Left ventricle myocardium superior (tissue), 1 donor: ENCODE measurements at regions of chr5 and their contacts with region 1.

Region 1: DNA sequence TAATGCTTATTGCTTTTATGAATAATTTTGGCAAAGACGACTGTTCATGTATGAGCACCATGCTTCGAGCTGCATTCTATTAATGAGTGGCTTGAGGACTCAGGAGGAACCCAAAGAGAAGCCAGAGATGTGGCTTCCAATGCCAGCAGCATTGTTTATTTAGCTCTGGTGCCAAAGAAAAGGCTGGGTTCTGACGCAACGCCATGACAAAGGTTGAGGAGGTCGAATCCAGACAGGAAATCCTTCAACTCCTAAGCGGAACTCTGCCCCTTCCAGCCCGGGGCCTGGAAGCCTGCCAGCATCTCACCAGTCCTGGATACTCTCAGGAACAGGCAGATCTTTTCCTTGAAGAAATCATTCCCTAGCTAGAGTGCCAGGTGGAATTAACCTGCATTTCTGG is 104.4 kb downstream of the ARHGAP26 start:
- DNase-seq: peak; percentile 80
- ATAC-seq: peak; percentile 39

Region 2: GRCh38 chr5:142529626-142530278 is 344.8 kb before region 1 on chr5:
- intact Hi-C with region 1: no loop called
- DNase-seq: no peak
- ATAC-seq: no peak

Region 3: GRCh38 chr5:142716963-142717362 is 157.6 kb before region 1 on chr5:
- intact Hi-C with region 1: loop called (anchors 5 kb)
- DNase-seq: peak; percentile 70
- ATAC-seq: peak; percentile 70

Region 4: DNA sequence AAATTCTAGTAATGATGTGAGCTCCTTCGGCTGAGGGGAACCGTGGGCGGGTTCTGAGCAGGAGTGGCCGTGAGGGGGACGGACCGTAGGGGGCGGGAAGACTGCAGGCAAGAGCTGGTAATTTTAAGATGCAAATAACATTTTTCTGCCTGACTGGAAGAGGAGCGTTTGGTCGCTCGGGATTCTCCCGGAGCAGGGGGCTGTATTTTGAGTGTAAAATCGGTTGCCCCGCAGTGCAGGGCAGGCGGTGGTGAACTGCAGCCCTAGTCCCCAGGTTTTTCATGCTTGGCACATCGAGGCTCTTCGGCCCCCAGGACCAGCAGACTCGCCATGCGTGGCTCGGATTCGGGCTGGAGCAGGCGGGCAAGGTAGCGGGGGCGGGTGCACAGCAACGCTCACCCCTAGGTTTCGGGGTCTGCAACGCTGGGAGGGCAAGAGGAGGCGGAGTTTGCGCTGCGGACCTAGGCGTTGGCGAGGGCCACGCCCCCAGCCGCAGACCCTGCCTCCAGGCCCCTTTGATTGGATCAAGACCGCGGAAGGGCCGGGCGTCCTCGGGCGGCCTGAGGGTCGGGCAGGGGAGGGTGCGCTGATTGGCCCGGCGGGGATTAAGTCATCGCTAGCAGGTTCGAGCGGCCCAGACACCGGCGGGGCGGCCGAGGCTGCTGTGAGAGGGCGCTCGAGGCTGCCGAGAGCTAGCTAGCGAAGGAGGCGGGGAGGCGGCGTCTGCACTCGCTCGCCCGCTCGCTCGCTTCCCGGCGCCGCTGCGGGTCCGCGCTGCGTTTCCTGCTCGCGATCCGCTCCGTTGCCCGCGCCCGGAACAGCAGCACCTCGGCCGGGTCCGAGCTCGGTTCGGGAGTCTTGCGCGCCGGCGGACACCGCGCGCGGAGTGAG is 104.6 kb before region 1 on chr5 and contains the start of gene ARHGAP26:
- intact Hi-C with region 1: loop called (anchors 5 kb)
- DNase-seq: peak; percentile 99
- ATAC-seq: peak; percentile 95
- total RNA-seq, gene ARHGAP26: 34.9 TPM